ENCODE measurements at regions of chr16 and their contacts with region 1.

Region 1: DNA sequence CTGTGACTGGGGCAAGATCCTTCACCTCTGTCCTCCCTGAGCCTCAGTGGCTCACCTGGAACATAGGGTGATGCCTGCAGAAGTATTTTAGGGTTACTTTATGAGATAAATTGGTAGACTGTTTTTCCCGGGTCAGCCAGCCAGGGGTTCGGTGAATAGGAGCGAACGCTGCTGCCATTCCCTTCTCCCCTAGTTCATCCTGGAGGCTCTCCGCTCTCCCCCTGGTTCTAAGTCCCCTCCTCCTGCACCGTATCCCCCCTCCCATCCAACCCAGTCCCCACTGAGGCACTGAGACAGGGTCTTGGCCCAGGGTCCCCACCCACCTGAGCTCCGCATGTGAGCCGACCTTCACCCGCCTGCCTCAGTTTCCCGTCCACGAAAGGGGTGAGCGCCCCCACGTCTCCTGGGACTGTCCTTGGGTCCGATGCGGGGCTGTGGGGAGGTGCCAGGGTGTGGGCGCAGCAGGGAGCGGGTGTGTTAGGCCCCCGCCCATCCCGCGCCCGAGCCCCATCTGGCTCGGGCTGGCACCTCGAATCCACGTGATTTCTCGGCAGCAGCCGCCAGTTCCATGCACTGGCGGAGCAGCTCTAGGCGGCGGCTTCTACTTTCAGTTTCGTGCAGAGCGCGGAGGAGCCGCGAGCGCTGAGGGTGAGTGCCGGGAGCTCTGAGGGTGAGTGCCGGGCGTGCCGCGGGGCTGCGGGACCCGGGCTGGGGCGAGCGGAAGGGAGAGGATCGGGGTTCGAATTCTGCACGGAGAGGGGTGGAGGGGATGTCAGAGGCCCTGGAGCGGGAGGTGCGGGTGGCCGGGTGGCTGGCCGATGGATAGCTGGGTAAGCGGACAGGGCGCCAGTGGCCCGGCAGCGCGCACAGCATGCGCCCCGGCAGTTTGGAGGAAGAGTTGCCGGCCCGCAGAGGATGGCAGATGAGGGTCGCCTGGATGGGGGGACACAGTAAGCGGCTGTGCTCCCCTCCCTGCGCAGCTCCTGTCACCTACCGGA is at the start of gene NLRC5:
- DNase-seq: peak; percentile 98
- H3K4me3 Mint-ChIP-seq: peak within 1 kb of the TSS; percentile 97
- H3K27ac Mint-ChIP-seq: peak within 1 kb of the TSS; percentile 99
- H3K4me1 Mint-ChIP-seq: peaks cover 74% of the 10 kb centered on the region
- H3K27me3 Mint-ChIP-seq: no peaks in the 10 kb centered on the region
- total RNA-seq, gene NLRC5: 208 and 214 TPM in 2 replicates

Region 2: DNA sequence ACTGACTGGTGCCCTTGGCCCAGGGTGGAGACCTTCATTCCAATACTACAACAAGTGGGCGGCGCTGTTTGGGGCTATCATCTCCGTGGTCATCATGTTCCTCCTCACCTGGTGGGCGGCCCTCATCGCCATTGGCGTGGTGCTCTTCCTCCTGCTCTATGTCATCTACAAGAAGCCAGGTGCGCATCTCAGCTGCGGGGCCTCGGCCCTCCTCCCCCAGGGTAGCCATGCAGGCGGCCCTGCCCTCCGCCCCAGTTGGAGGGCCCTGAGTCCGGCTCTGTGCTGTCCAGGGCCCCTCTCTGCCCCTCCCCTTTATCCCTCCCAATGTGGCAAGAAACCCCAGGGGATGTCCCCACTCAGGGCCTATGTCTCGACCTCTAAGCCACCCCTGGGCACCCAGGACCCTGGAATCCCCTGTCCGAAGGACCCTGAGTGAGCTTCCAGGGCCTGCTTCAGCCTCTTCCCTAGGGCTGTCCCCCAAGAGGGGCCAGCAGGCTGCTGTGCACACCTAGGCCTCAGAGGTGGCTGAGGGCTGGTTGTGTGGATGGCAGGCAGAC is 105.1 kb before region 1 on chr16:
- intact Hi-C with region 1: no loop called
- DNase-seq: no peak
- H3K4me3 Mint-ChIP-seq: no peak overlapping the region
- H3K27ac Mint-ChIP-seq: no peak overlapping the region
- H3K4me1 Mint-ChIP-seq: no peaks in the 10 kb centered on the region
- H3K27me3 Mint-ChIP-seq: no peaks in the 10 kb centered on the region

Region 3: DNA sequence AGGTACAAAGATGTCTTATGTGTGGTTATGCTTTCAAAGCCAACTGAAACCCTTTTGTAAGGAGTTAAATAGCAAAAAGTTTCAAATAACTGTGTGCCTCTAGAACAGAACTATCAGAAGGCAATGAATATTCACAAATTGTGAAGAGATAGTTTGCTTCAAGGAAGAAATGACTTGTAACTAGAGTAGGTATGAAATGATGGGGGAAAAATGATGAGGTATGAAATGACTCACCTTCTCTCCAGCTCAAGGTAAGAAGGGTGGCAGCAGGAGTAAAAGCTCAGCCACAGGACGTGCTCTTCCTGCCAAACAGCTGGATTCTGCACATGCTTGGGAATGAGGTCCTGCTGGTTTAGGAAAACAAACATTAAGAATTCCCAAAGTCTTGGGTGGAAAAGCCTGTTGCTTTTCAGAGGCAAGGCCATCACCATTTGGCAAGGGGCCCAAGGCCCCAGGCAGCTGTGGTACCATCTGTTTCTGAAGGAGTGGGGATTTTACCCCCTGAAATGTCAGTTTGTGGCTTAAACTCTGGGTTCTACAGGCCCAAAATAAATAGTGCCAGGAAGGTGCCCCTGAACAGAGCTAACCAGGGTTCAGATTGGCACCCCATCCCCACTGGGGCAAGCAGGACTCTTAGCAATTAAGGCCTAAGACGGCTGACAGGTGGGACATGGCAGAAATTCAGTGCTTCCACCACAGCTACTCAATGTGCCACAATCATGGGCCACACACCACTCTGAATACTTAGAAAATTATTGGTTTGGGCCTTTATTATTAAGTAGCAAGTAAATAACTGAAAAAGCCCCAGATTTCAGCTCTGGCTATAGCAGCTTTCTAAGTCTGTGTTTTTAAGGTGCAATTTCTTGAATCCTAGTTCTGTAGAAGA is 44.0 kb before region 1 on chr16:
- intact Hi-C with region 1: loop called (anchors 2 kb)
- DNase-seq: no peak
- H3K4me3 Mint-ChIP-seq: peak overlapping the region; percentile 23
- H3K27ac Mint-ChIP-seq: peak overlapping the region; percentile 92
- H3K4me1 Mint-ChIP-seq: peaks cover 39% of the 10 kb centered on the region
- H3K27me3 Mint-ChIP-seq: no peaks in the 10 kb centered on the region

Region 4: DNA sequence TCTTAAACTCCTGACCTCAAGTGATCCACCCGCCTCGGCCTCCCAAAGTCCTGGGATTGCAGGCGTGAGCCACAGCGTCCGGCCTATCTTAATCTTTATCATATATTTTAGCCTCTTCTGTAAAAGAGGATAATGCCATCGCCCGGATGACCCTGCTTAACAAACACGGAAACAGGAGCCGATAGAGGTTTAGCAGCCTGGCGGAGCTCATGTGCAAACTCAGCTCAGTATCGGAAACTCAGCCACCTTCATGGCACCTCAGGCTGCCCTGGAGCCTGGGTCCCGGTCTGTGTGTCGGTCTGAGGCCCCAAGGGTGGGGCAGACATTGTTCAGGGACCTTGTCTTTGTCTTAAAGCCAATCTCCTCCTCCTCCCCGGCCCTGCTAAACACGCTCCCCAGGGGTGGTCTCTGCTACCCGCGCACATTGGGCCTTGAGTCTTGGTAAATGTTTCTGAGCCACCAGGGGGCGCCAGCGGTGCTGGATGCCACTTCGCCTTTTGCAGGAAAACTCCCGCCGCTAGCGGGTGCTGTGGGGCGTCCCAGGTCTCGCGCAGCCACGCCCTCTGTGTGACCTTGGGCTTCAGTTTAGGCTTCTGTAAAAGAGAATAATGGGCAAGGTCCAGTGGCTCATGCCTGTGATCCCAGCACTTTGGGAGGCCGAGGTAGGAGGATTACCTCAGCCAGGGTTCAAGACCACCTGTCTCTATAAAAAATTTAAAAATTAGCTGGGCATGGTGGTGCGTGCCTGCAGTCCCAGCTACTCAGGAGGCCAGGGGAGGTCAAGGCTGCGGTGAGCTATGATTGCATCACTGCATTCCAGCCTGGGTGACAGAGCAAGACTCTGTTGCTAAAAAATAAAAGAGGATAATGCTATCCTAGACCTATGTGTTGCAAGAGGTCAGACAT is 24.8 kb before region 1 on chr16:
- intact Hi-C with region 1: loop called (anchors 1 kb)
- DNase-seq: peak; percentile 99
- H3K4me3 Mint-ChIP-seq: no peak overlapping the region
- H3K27ac Mint-ChIP-seq: peak overlapping the region; percentile 14
- H3K4me1 Mint-ChIP-seq: peaks cover 19% of the 10 kb centered on the region
- H3K27me3 Mint-ChIP-seq: peaks cover 1% of the 10 kb centered on the region

Region 5: GRCh38 chr16:57000271-57001025 is 11.2 kb after region 1 on chr16:
- intact Hi-C with region 1: loop called (anchors 1 kb)
- DNase-seq: peak; percentile 74
- H3K4me3 Mint-ChIP-seq: peak overlapping the region; percentile 75
- H3K27ac Mint-ChIP-seq: peak overlapping the region; percentile 97
- H3K4me1 Mint-ChIP-seq: peaks cover 74% of the 10 kb centered on the region
- H3K27me3 Mint-ChIP-seq: no peaks in the 10 kb centered on the region

Region 6: GRCh38 chr16:57042157-57043111 is 53.2 kb after region 1 on chr16:
- intact Hi-C with region 1: loop called (anchors 1 kb)
- DNase-seq: peak; percentile 88
- H3K4me3 Mint-ChIP-seq: peak overlapping the region; percentile 80
- H3K27ac Mint-ChIP-seq: peak overlapping the region; percentile 97
- H3K4me1 Mint-ChIP-seq: peaks cover 62% of the 10 kb centered on the region
- H3K27me3 Mint-ChIP-seq: no peaks in the 10 kb centered on the region

Region 7: DNA sequence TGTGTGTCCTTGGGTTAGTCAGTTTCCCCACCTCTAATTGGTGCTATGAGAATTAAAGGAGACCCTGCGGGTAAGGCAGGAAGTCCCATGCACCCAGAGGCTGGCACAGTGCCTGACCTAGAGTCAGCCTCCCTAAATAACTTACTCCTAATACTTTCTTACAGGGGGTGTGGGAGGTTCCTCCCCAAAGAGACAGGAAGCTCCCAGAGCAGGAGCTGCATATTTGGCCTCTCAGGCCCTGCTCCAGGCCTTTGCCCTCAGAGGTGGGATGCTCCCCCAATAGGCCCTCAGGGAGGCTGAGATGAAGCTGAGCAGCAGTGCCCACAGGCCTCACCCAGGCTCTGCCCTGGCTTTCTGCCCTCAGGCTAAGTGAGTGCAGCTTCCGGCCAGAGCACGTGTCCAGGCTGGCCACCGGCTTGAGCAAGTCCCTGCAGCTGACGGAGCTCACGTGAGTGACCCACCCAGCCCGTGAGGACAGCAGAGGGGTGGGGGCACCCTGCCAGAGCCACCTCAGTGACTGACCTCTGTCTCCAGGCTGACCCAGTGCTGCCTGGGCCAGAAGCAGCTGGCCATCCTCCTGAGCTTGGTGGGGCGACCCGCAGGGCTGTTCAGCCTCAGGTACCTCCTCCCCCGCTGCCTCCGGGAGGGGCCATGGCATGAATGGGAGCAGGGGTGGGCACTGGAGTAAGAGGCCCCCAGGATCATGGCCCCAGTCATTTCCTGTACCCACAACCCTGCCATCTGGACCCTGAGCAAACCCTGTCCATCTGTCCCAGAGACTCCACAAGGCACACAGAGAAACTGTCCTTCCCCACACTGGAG is 72.0 kb after region 1 on chr16:
- intact Hi-C with region 1: no loop called
- DNase-seq: no peak
- H3K4me3 Mint-ChIP-seq: no peak overlapping the region
- H3K27ac Mint-ChIP-seq: peak overlapping the region; percentile 35
- H3K4me1 Mint-ChIP-seq: peaks cover 6% of the 10 kb centered on the region
- H3K27me3 Mint-ChIP-seq: no peaks in the 10 kb centered on the region